ENCODE measurements at regions of chr12 and their contacts with region 1.

Region 1: DNA sequence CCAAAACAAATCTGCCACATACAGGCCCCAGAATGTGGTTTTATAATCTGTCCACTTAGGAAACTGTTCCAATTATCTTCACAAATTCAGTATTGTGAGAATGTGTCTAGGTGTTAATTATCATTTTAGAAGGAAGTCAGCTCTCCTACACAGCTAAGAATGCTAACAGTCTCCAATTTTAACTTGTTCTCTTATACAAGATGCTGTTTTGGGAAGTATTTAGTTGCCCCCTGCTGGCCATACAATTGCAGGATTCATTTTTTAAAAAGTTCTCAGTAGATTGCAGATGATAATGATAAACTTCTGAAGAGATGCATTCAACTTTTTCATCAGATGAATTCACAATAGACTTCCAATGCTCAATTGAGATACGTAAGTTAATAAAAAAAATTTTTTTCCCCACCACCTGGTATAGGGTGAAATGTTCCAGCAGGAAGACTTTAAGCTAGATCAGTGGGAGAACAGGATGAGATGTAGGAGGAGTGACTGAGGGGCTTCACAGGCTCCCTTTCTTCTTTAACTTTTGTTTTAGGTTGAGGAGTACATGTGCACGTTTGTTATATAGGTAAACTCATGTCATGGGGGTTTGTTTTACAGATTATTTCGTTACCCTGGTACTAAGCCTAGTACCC is 27.3 kb upstream of the OSBPL8 start:
- DNase-seq: peak in 7 of 9 donors; percentile 34 to 70 (median 59)
- ATAC-seq: peak; percentile 77
- H3K4me3 ChIP-seq: no peak overlapping the region
- H3K4me3 Mint-ChIP-seq: no peak overlapping the region
- H3K27ac ChIP-seq: no peak overlapping the region
- H3K27ac Mint-ChIP-seq: peak overlapping the region in 1 of 9 donors; percentile 73
- H3K4me1 ChIP-seq: no peaks in the 10 kb centered on the region
- H3K4me1 Mint-ChIP-seq: peaks cover 0 to 6% (median 0%) of the 10 kb centered on the region in 7 donors
- H3K27me3 ChIP-seq: no peaks in the 10 kb centered on the region
- H3K27me3 Mint-ChIP-seq: no peaks in the 10 kb centered on the region

Region 2: GRCh38 chr12:75526655-75527511 is 1060.0 kb before region 1 on chr12:
- CTCF ChIA-PET with region 1: interaction called, 6 read pairs
- POLR2A ChIA-PET with region 1: no interaction called
- intact Hi-C with region 1: loop called (anchors 1 to 5 kb)
- DNase-seq: peak in 6 of 9 donors; percentile 10 to 26 (median 18)
- ATAC-seq: peak; percentile 53
- H3K4me3 ChIP-seq: no peak overlapping the region
- H3K4me3 Mint-ChIP-seq: no peak overlapping the region
- H3K27ac ChIP-seq: no peak overlapping the region
- H3K27ac Mint-ChIP-seq: peak overlapping the region in 1 of 9 donors; percentile 21
- H3K4me1 ChIP-seq: no peaks in the 10 kb centered on the region
- H3K4me1 Mint-ChIP-seq: peaks cover 0 to 7% (median 2%) of the 10 kb centered on the region in 7 donors
- H3K27me3 ChIP-seq: no peaks in the 10 kb centered on the region
- H3K27me3 Mint-ChIP-seq: peaks cover 32 to 40% (median 38%) of the 10 kb centered on the region in 5 donors

Region 3: DNA sequence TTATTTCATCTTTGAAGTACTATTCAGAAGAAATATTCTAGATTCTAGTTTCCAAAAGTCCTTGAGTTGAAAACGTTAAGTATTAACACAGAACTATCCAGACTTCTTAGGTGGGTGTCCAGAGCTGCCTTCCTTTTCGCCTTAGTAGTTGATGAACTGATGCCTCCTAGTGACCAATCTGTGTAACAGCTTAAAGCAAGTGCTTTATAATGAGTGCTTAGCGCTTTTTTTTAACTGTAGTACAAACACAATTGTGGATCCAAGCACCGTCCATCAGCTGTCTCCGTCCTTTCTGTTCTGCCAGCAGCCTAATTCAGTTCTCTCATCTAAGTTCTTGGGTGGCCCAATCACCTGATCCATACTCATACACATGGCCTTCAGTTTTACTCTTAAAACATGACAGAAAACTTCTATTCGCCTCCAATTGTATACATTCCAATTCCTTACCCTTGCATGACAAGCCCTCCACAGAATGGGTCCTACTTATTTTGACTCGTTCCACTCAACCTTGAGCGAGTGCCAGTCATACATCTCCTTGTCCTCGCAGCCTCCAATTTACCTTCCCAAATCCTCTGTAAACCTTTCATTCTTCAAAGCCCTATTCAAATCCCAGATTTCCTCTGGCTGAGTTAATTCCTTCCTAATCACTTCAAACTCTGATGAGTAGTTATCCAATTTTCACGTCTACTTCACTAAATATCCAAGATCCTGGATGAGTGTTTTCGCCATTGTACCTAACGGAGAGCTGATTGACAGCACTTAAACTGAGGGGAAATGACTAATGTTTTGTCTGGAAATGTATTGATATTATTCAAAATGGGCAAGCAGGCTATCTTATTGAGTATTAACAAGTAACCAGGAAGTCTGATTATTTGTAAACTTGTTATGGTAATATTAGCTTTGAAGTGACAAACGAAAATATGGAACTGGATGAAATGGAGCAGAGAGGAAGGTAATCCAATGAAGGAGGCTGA is 549.5 kb before region 1 on chr12:
- CTCF ChIA-PET with region 1: no interaction called
- POLR2A ChIA-PET with region 1: no interaction called
- intact Hi-C with region 1: loop called in 1 of 2 experiments (anchors 2 kb)
- DNase-seq: peak in 7 of 9 donors; percentile 46 to 63 (median 55)
- ATAC-seq: peak; percentile 87
- H3K4me3 ChIP-seq: no peak overlapping the region
- H3K4me3 Mint-ChIP-seq: no peak overlapping the region
- H3K27ac ChIP-seq: no peak overlapping the region
- H3K27ac Mint-ChIP-seq: peak overlapping the region in 1 of 9 donors; percentile 1
- H3K4me1 ChIP-seq: peaks cover 0 to 4% of the 10 kb centered on the region in 2 donors
- H3K4me1 Mint-ChIP-seq: peaks cover 5 to 29% (median 12%) of the 10 kb centered on the region in 7 donors
- H3K27me3 ChIP-seq: no peaks in the 10 kb centered on the region
- H3K27me3 Mint-ChIP-seq: no peaks in the 10 kb centered on the region

Region 4: DNA sequence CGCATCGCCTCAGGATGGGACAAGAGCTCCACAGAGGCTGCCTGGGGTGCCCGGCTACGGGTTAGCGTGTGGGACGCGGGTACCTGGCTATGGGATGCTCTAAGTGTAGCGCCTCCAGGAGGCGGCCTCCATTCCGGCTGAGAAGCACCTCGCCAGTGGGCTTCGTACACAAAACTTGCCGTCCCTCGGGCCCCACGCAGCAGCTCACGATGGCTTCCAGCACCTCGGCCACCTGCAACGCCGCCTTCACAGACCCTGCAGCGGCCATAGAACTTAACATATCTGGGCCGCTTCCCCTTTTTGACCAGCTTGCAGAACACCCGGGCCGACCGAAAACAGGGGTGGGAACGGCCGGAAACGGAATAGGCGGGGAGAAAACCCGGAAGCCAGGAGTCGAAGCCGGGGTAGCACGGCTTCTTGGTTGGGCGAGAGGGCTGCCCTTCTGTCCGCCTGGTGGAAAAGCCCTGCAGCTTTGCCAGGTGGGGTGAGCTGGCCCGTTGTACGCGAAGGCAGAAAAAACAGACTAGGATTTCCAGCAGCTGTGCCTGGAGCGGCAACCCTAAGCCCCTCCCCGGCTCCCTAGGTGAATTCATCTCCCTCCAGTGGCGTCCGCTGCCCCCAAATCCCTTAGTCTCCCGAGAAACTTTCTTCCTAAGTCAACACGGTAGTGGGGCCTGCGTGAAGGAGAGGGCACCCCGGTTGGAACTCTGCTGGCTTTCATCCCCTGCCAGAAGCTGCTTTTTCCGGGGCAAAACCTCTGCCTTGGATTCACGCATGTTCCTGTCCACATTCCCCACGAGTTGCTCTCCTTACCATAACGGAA is 238.6 kb before region 1 on chr12 and contains the start of gene BBS10:
- CTCF ChIA-PET with region 1: no interaction called
- POLR2A ChIA-PET with region 1: no interaction called
- intact Hi-C with region 1: loop called (anchors 2 kb)
- DNase-seq: peak; percentile 64 to 86 (median 84)
- ATAC-seq: peak; percentile 97
- H3K4me3 ChIP-seq: peak within 1 kb of the TSS; percentile 88
- H3K4me3 Mint-ChIP-seq: peak within 1 kb of the TSS; percentile 89 to 98 (median 96)
- H3K27ac ChIP-seq: peak within 1 kb of the TSS; percentile 79
- H3K27ac Mint-ChIP-seq: peak within 1 kb of the TSS; percentile 85 to 95 (median 93)
- H3K4me1 ChIP-seq: peaks cover 16 to 20% of the 10 kb centered on the region in 2 donors
- H3K4me1 Mint-ChIP-seq: peaks cover 15 to 48% (median 30%) of the 10 kb centered on the region in 7 donors
- H3K27me3 ChIP-seq: no peaks in the 10 kb centered on the region
- H3K27me3 Mint-ChIP-seq: no peaks in the 10 kb centered on the region
- total RNA-seq, gene BBS10: 2.5 to 11.5 (median 5.2) TPM

Region 5: GRCh38 chr12:76455582-76456345 is 131.1 kb before region 1 on chr12:
- CTCF ChIA-PET with region 1: interaction called, 16 read pairs
- POLR2A ChIA-PET with region 1: no interaction called
- intact Hi-C with region 1: loop called in 1 of 2 experiments (anchors 1 kb)
- DNase-seq: peak in 6 of 9 donors; percentile 15 to 49 (median 38)
- ATAC-seq: peak; percentile 78
- H3K4me3 ChIP-seq: no peak overlapping the region
- H3K4me3 Mint-ChIP-seq: peak overlapping the region in 1 of 10 donors; percentile 38
- H3K27ac ChIP-seq: no peak overlapping the region
- H3K27ac Mint-ChIP-seq: peak overlapping the region in 3 of 9 donors; percentile 36 to 65 (median 46)
- H3K4me1 ChIP-seq: peaks cover 14 to 16% of the 10 kb centered on the region in 2 donors
- H3K4me1 Mint-ChIP-seq: peaks cover 10 to 58% (median 37%) of the 10 kb centered on the region in 7 donors
- H3K27me3 ChIP-seq: no peaks in the 10 kb centered on the region
- H3K27me3 Mint-ChIP-seq: no peaks in the 10 kb centered on the region

Region 6: GRCh38 chr12:76551482-76551888 is 35.4 kb before region 1 on chr12:
- CTCF ChIA-PET with region 1: interaction called, 3 read pairs
- POLR2A ChIA-PET with region 1: no interaction called
- intact Hi-C with region 1: loop called in 1 of 2 experiments (anchors 5 kb)
- DNase-seq: no peak
- ATAC-seq: peak; percentile 28
- H3K4me3 ChIP-seq: no peak overlapping the region
- H3K4me3 Mint-ChIP-seq: peak overlapping the region in 7 of 10 donors; percentile 2 to 71 (median 28)
- H3K27ac ChIP-seq: no peak overlapping the region
- H3K27ac Mint-ChIP-seq: peak overlapping the region in 2 of 9 donors; percentile 42 to 64
- H3K4me1 ChIP-seq: peaks cover 22 to 59% of the 10 kb centered on the region in 2 donors
- H3K4me1 Mint-ChIP-seq: peaks cover 65 to 99% (median 92%) of the 10 kb centered on the region in 7 donors
- H3K27me3 ChIP-seq: no peaks in the 10 kb centered on the region
- H3K27me3 Mint-ChIP-seq: no peaks in the 10 kb centered on the region

Measured in naive thymus-derived CD4-positive, alpha-beta T cell (primary cell).